ENCODE measurements at regions of chr7 and their contacts with region 1.

Region 1: GRCh38 chr7:26376175-26376917 is 84.7 kb downstream of the SNX10 start:
- DNase-seq: peak in 1 of 3 donors; percentile 15
- H3K4me3 ChIP-seq: peak overlapping the region; percentile 3 to 71 (median 34)
- H3K4me3 Mint-ChIP-seq: peak overlapping the region; percentile 62 to 87
- H3K27ac ChIP-seq: no peak overlapping the region
- H3K27ac Mint-ChIP-seq: peak overlapping the region in 1 of 7 donors; percentile 53
- H3K4me1 ChIP-seq: peaks cover 17 to 28% of the 10 kb centered on the region in 2 donors
- H3K4me1 Mint-ChIP-seq: peaks cover 27% of the 10 kb centered on the region
- H3K27me3 ChIP-seq: peaks cover 22 to 39% of the 10 kb centered on the region in 2 donors
- H3K27me3 Mint-ChIP-seq: peaks cover 27 to 37% (median 29%) of the 10 kb centered on the region in 3 donors
- CTCF ChIP-seq: no peak

Region 2: DNA sequence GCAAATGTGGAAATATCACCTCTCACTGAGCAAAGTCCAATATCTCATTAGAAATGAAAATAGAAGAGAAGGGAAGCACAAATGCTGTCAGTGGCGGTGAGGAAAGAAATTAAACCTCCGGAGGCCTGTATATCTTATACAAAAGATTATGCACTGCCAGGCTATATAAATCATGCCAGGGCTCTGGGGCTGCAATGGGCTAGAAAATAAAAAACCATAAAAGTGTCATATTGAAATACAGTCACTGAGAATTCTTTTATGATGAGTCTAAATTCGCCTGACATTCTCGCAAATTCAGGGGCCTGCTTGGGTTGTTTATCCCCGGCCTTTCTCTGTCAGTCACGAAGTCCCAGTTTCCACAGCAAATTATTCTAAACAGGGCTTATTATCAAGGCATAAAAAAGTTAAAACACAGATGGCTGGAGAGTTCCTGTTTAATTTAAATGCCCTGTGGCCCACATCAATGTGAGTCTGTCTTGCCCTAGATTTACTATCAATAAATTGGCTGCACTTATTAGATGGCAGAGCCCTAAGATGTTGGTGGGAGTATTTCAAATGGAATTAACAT is 109.1 kb after region 1 on chr7:
- intact Hi-C with region 1: no loop called
- DNase-seq: no peak
- H3K4me3 ChIP-seq: no peak overlapping the region
- H3K4me3 Mint-ChIP-seq: no peak overlapping the region
- H3K27ac ChIP-seq: no peak overlapping the region
- H3K27ac Mint-ChIP-seq: no peak overlapping the region
- H3K4me1 ChIP-seq: no peaks in the 10 kb centered on the region
- H3K4me1 Mint-ChIP-seq: no peaks in the 10 kb centered on the region
- H3K27me3 ChIP-seq: no peaks in the 10 kb centered on the region
- H3K27me3 Mint-ChIP-seq: peaks cover 0 to 4% (median 4%) of the 10 kb centered on the region in 3 donors
- CTCF ChIP-seq: no peak

Region 3: GRCh38 chr7:26500749-26501352 is 124.5 kb after region 1 on chr7:
- intact Hi-C with region 1: loop called (anchors 5 to 10 kb)
- DNase-seq: peak; percentile 27 to 54 (median 47)
- H3K4me3 ChIP-seq: no peak overlapping the region
- H3K4me3 Mint-ChIP-seq: no peak overlapping the region
- H3K27ac ChIP-seq: no peak overlapping the region
- H3K27ac Mint-ChIP-seq: no peak overlapping the region
- H3K4me1 ChIP-seq: no peaks in the 10 kb centered on the region
- H3K4me1 Mint-ChIP-seq: peaks cover 2% of the 10 kb centered on the region
- H3K27me3 ChIP-seq: no peaks in the 10 kb centered on the region
- H3K27me3 Mint-ChIP-seq: peaks cover 0 to 4% (median 3%) of the 10 kb centered on the region in 3 donors
- CTCF ChIP-seq: peak; percentile 63

Region 4: DNA sequence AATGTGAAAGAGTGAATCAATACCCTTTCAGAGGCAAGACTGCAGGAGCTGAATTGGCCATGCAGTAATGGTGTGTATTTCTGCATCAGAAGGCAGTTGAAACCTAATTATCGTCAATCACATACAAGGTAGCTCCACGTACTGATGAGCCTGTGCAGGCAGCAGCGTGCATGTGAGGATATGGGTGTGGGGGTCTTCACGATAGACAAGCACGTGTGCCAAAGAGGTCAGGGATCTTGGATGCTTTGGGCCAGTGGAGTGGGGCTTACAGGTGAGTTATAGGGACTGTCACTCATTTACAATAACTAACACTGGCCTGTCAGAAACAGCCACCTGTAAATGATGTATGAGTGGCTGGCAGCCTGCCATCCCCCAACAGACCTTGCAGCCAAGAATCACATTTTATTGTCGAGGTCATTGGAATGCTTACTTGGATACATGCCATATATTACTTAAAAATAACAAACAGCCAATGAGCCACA is 277.1 kb after region 1 on chr7:
- intact Hi-C with region 1: no loop called
- DNase-seq: no peak
- H3K4me3 ChIP-seq: no peak overlapping the region
- H3K4me3 Mint-ChIP-seq: no peak overlapping the region
- H3K27ac ChIP-seq: no peak overlapping the region
- H3K27ac Mint-ChIP-seq: peak overlapping the region in 1 of 7 donors; percentile 33
- H3K4me1 ChIP-seq: no peaks in the 10 kb centered on the region
- H3K4me1 Mint-ChIP-seq: peaks cover 2% of the 10 kb centered on the region
- H3K27me3 ChIP-seq: no peaks in the 10 kb centered on the region
- H3K27me3 Mint-ChIP-seq: no peaks in the 10 kb centered on the region
- CTCF ChIP-seq: no peak

Measured in CD14-positive monocyte (primary cell).